Naive thymus-derived CD4-positive, alpha-beta T cell (primary cell): ENCODE measurements at regions of chr12 and their contacts with region 1.

Region 1: GRCh38 chr12:56104109-56104814 is at the start of gene PA2G4:
- DNase-seq: peak; percentile 83 to 97 (median 96)
- ATAC-seq: peak; percentile 93
- H3K4me3 ChIP-seq: peak within 1 kb of the TSS; percentile 87
- H3K4me3 Mint-ChIP-seq: peak within 1 kb of the TSS; percentile 91 to 100 (median 98)
- H3K27ac ChIP-seq: peak within 1 kb of the TSS; percentile 82
- H3K27ac Mint-ChIP-seq: peak within 1 kb of the TSS; percentile 92 to 99 (median 98)
- H3K4me1 ChIP-seq: peaks cover 36 to 37% of the 10 kb centered on the region in 2 donors
- H3K4me1 Mint-ChIP-seq: peaks cover 31 to 69% (median 64%) of the 10 kb centered on the region in 7 donors
- H3K27me3 ChIP-seq: no peaks in the 10 kb centered on the region
- H3K27me3 Mint-ChIP-seq: peaks cover 0 to under 1% (median 0%) of the 10 kb centered on the region in 5 donors
- total RNA-seq, gene PA2G4: 61.7 to 254 (median 109) TPM

Region 2: GRCh38 chr12:55829967-55830600 is 274.2 kb before region 1 on chr12:
- CTCF ChIA-PET with region 1: no interaction called
- POLR2A ChIA-PET with region 1: interaction called, 4 read pairs
- intact Hi-C with region 1: loop called in 1 of 2 experiments (anchors 1 kb)
- DNase-seq: peak in 5 of 9 donors; percentile 16 to 44 (median 20)
- ATAC-seq: peak; percentile 2
- H3K4me3 ChIP-seq: peak overlapping the region; percentile 99
- H3K4me3 Mint-ChIP-seq: peak overlapping the region; percentile 88 to 99 (median 99)
- H3K27ac ChIP-seq: peak overlapping the region; percentile 84
- H3K27ac Mint-ChIP-seq: peak overlapping the region; percentile 85 to 98 (median 95)
- H3K4me1 ChIP-seq: peaks cover 37 to 40% of the 10 kb centered on the region in 2 donors
- H3K4me1 Mint-ChIP-seq: peaks cover 42 to 69% (median 53%) of the 10 kb centered on the region in 7 donors
- H3K27me3 ChIP-seq: no peaks in the 10 kb centered on the region
- H3K27me3 Mint-ChIP-seq: no peaks in the 10 kb centered on the region

Region 3: GRCh38 chr12:55996715-55997534 is 107.3 kb before region 1 on chr12 and contains the start of gene SUOX:
- CTCF ChIA-PET with region 1: interaction called, 6 read pairs
- POLR2A ChIA-PET with region 1: interaction called, 11 read pairs
- intact Hi-C with region 1: loop called (anchors 1 to 5 kb)
- DNase-seq: peak in 3 of 9 donors; percentile 8 to 58 (median 31)
- ATAC-seq: peak; percentile 93
- H3K4me3 ChIP-seq: no peak within 1 kb of the TSS
- H3K4me3 Mint-ChIP-seq: peak within 1 kb of the TSS; percentile 49 to 87 (median 62)
- H3K27ac ChIP-seq: no peak within 1 kb of the TSS
- H3K27ac Mint-ChIP-seq: peak within 1 kb of the TSS in 7 of 9 donors; percentile 19 to 78 (median 63)
- H3K4me1 ChIP-seq: peaks cover 0 to 14% of the 10 kb centered on the region in 2 donors
- H3K4me1 Mint-ChIP-seq: peaks cover 8 to 37% (median 16%) of the 10 kb centered on the region in 7 donors
- H3K27me3 ChIP-seq: no peaks in the 10 kb centered on the region
- H3K27me3 Mint-ChIP-seq: peaks cover 0 to 4% (median 0%) of the 10 kb centered on the region in 5 donors
- total RNA-seq, gene SUOX: 1.9 to 10.4 (median 7.1) TPM

Region 4: GRCh38 chr12:56078990-56079664 is 25.1 kb before region 1 on chr12:
- CTCF ChIA-PET with region 1: interaction called, 5 read pairs
- POLR2A ChIA-PET with region 1: interaction called, 85 read pairs
- intact Hi-C with region 1: loop called (anchors 1 kb)
- DNase-seq: peak in 8 of 9 donors; percentile 20 to 66 (median 40)
- ATAC-seq: peak; percentile 74
- H3K4me3 ChIP-seq: peak overlapping the region; percentile 68
- H3K4me3 Mint-ChIP-seq: peak overlapping the region; percentile 80 to 91 (median 86)
- H3K27ac ChIP-seq: no peak overlapping the region
- H3K27ac Mint-ChIP-seq: peak overlapping the region in 4 of 9 donors; percentile 28 to 73 (median 50)
- H3K4me1 ChIP-seq: peaks cover 5 to 10% of the 10 kb centered on the region in 2 donors
- H3K4me1 Mint-ChIP-seq: peaks cover 0 to 16% (median 10%) of the 10 kb centered on the region in 7 donors
- H3K27me3 ChIP-seq: no peaks in the 10 kb centered on the region
- H3K27me3 Mint-ChIP-seq: peaks cover 0 to 51% (median 8%) of the 10 kb centered on the region in 5 donors

Region 5: DNA sequence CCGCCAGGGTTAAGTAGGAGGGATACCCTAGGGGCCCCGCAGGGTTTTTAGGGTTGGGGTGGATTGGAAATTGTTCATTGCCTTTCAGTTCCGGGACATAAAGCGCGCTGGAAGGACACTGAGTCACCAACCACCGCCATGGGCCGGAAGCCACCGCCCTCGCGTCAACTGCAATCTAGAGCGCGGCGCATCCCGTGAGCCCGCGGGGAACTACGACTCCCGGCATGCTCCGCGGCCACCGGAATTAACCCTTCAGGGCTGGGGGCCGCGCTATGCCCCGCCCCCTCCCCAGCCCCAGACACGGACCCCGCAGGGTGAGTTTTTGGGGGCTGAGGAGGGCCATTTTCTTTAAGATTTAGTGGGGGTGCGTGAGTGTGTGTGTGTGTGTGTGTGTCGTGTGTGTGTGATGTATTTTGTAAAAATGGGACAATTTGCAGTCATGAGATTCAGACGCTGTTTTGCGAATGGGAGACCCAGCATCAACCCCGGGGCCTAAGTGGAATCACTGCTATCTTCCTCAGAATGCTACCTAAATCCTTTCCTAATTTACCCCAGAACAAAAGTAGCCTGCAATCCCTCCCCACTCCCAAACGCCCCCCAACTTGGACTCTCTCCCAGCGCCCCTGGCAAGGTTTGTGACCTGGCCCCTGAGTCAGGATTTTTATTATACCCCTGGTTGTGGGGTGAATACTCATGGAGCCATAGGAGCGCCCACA is 48.2 kb after region 1 on chr12 and contains the start of gene MYL6B:
- CTCF ChIA-PET with region 1: no interaction called
- POLR2A ChIA-PET with region 1: interaction called, 4 read pairs
- intact Hi-C with region 1: loop called in 1 of 2 experiments (anchors 1 kb)
- DNase-seq: peak; percentile 79 to 94 (median 87)
- ATAC-seq: peak; percentile 98
- H3K4me3 ChIP-seq: peak within 1 kb of the TSS; percentile 86
- H3K4me3 Mint-ChIP-seq: peak within 1 kb of the TSS; percentile 80 to 96 (median 92)
- H3K27ac ChIP-seq: peak within 1 kb of the TSS; percentile 80
- H3K27ac Mint-ChIP-seq: peak within 1 kb of the TSS; percentile 84 to 99 (median 97)
- H3K4me1 ChIP-seq: peaks cover 22 to 25% of the 10 kb centered on the region in 2 donors
- H3K4me1 Mint-ChIP-seq: peaks cover 17 to 55% (median 39%) of the 10 kb centered on the region in 7 donors
- H3K27me3 ChIP-seq: no peaks in the 10 kb centered on the region
- H3K27me3 Mint-ChIP-seq: no peaks in the 10 kb centered on the region
- total RNA-seq, gene MYL6B: 3.7 to 60.3 (median 8.9) TPM

Region 6: GRCh38 chr12:57430931-57431720 is 1326.9 kb after region 1 on chr12 and contains the start of gene R3HDM2:
- CTCF ChIA-PET with region 1: no interaction called
- POLR2A ChIA-PET with region 1: no interaction called
- intact Hi-C with region 1: loop called in 1 of 2 experiments (anchors 5 kb)
- DNase-seq: peak; percentile 83 to 96 (median 94)
- ATAC-seq: peak; percentile 95
- H3K4me3 ChIP-seq: peak within 1 kb of the TSS; percentile 55
- H3K4me3 Mint-ChIP-seq: peak within 1 kb of the TSS; percentile 88 to 100 (median 98)
- H3K27ac ChIP-seq: peak within 1 kb of the TSS; percentile 85
- H3K27ac Mint-ChIP-seq: peak within 1 kb of the TSS; percentile 97 to 100 (median 99)
- H3K4me1 ChIP-seq: peaks cover 8 to 17% of the 10 kb centered on the region in 2 donors
- H3K4me1 Mint-ChIP-seq: peaks cover 27 to 53% (median 39%) of the 10 kb centered on the region in 7 donors
- H3K27me3 ChIP-seq: no peaks in the 10 kb centered on the region
- H3K27me3 Mint-ChIP-seq: no peaks in the 10 kb centered on the region
- total RNA-seq, gene R3HDM2: 74.9 to 145 (median 120) TPM